PC-9 (cell line): ENCODE measurements at regions of chr4 and their contacts with region 1.

Region 1: GRCh38 chr4:121958777-121959176 is 6.9 kb upstream of the TRPC3 start:
- DNase-seq: no peak
- H3K4me3 ChIP-seq: no peak overlapping the region
- H3K27ac ChIP-seq: no peak overlapping the region
- H3K4me1 ChIP-seq: no peaks in the 10 kb centered on the region
- H3K27me3 ChIP-seq: no peaks in the 10 kb centered on the region
- CTCF ChIP-seq: no peak

Region 2: GRCh38 chr4:122003335-122003734 is 44.6 kb after region 1 on chr4:
- CTCF ChIA-PET with region 1: no interaction called
- POLR2A ChIA-PET with region 1: interaction called, 13 read pairs
- intact Hi-C with region 1: no loop called
- DNase-seq: peak in 1 of 2 experiments; percentile 7
- H3K4me3 ChIP-seq: no peak overlapping the region
- H3K27ac ChIP-seq: no peak overlapping the region
- H3K4me1 ChIP-seq: no peaks in the 10 kb centered on the region
- H3K27me3 ChIP-seq: no peaks in the 10 kb centered on the region
- CTCF ChIP-seq: peak; percentile 70